GM13977 (cell line): ENCODE measurements at regions of chr1 and their contacts with region 1.

Region 1: DNA sequence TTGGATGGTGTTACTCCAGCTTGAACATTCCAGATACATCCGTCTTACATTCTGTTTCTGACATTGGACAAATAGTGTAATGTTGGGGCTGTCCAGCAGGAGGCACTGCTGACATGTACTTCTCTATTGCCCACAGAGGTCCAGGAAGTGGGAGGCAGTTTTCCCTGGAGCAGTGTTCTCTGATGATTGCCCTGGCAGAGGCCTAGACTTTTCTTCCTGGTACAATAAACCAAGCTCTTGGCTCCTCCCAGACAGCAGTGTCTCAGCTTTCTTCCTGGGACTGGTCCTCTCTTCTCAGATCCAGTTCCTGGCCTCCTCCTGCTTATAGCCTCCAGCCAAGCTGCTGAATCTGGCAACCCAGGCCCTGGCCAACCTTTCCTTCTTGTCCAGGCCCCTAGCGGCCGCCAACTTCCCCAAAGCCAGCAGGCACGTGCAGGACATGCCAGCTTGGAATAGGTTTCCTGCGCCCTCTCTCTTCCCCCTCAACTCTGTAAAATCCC is 14.9 kb upstream of the IFNLR1 start:
- DNase-seq: peak; percentile 53
- CTCF ChIP-seq: peak; percentile 87

Region 2: DNA sequence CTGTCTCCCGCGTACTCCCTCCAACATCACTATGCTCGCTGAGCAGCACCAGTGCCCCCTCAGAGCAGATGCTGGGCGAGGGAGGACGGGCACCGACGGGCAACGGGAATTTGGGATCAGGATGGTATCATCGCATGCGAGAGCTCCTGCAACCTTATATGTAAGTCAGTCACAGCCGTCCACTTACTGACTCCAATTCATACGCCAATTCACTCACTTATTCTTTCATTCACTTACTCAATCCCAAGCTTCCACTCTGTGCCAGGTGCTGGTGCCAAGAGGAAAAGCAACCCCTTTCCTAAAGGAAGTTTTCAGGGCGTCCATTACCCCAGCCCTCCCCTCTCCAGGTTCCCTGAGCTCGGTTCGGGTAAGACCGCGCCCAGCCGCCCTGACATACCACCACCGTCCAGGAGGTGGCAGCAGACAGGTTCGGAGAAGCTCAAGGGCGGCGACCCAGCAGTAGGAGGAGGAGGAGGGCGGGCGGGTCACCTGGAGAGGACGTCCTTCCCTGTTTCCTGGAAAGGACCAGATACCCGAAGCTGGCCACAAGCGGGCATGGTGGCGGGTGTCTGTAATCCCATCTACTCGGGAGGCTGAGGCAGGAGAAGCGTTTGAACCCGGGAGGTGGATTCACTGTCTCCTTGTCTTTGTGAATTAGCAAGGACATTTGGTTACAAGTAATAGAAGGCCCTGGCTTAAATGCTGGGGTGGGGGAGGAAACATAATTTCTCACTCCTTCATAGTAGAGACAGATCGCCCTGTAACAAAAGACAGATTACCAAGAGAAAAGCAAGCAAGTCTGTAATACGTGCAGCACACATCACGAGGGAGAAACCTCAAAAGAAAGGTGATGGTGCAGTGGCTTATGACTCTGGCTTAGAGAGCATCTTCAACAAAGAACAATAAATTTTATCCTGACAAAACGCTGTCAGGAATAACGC is 51.5 kb before region 1 on chr1:
- in situ Hi-C with region 1: no loop called
- DNase-seq: peak; percentile 83
- CTCF ChIP-seq: peak; percentile 90

Region 3: DNA sequence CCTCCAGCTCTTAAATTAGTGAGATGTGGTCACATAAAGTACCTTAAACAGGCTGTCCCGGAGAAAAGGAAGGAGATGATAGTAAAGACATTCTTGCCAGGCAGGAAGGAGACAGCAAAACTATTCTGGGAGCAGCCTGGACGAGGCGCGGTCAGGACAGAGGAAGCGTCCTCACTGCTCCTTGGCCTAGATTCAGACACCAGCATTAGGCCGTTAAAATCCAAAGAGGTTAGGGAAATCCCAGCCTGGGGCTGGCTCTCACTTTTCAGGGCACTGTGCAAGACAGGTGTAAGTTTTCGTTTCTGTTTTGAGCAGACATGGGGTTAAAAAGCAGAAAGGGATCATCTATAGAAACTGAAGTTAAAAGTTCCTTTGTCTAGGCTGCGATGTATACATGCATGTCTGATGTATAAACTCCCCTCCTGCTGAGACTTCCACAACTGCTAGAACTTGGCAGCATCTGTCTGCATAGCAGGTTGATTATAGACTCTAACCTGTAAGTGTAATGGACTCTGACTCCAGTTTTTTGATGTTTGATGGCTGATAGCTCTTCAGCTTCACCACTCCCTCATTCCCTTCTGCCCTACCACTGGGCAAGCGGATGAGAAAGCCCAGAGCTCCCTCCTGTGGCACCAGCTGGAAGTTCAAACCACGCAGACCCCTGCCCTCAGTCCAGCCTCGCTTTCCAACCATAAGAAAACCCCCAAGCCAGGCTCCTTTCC is 190.1 kb after region 1 on chr1:
- in situ Hi-C with region 1: loop called (anchors 5 kb)
- DNase-seq: peak; percentile 75
- CTCF ChIP-seq: peak; percentile 87

Region 4: DNA sequence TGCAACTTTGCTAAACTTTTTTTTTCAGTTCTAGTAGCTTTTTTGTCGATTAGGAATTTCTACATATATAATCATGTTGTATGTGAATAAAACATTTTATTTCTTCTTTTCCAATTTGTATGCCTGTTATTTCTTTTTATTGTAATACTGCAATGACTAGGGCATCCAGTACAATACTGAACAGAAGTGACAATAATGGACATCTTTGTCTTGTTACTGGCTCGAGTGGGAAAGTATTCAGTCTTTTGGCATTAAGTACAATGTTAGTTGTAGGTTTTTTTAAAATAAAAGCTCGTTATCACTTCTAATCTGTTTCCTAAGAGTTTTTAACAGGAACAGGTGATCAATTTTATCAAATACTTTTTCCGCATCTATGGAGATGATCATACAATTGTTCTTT is 201.8 kb after region 1 on chr1:
- in situ Hi-C with region 1: no loop called
- DNase-seq: no peak
- CTCF ChIP-seq: no peak

Region 5: DNA sequence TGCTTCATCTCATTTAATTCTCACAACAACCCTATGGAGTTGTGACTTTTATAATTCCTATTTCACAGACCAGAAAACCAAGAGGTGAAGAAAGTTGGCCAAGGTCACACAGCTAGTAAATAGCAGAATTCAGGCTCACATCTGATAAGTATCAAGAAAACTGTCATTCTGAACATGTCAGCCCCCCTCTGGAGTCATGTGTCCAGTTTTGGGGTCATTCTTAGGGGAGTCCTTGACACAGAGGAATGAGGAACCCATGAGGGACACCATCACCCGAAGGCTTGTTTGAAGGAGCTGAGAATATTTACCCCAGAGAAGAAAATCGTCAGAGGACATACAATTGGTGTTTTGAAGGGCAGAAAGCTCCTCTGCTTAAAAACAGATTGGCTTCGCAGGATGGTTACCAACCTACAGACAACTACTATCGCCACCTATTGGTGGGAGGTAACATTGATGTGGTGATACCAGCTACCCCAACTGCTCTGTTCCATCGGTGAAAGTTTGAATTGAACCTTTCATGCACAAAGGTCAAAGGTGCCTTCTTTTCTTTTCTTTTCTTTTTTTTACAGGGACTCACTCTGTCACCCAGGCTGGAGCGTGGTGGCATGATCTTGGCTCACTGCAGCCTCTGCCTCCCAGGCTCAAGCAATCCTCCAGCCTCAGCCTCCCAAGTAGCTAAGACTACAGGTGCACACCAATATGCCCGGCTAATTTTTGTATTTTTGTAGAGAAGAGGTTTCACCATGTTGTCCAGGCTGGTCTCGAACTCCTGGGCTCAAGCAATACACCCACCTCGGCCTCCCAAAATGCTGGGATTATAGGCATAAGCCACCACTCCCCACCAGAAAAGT is 385.2 kb after region 1 on chr1:
- in situ Hi-C with region 1: loop called (anchors 25 kb)
- DNase-seq: peak; percentile 79
- CTCF ChIP-seq: peak; percentile 75